Thyroid gland (tissue), 4 donors: ENCODE measurements at regions of chr1 and their contacts with region 1.

Region 1: GRCh38 chr1:113835642-113836307 is 23.5 kb upstream of the RSBN1 start:
- DNase-seq: peak in 1 of 2 donors; percentile 5
- H3K4me3 ChIP-seq: no peak overlapping the region
- H3K27ac ChIP-seq: no peak overlapping the region
- H3K4me1 ChIP-seq: no peaks in the 10 kb centered on the region
- H3K27me3 ChIP-seq: no peaks in the 10 kb centered on the region
- CTCF ChIP-seq: peak in 4 of 6 experiments; percentile 42 to 73 (median 58)
- POLR2A ChIP-seq: no peak

Region 2: DNA sequence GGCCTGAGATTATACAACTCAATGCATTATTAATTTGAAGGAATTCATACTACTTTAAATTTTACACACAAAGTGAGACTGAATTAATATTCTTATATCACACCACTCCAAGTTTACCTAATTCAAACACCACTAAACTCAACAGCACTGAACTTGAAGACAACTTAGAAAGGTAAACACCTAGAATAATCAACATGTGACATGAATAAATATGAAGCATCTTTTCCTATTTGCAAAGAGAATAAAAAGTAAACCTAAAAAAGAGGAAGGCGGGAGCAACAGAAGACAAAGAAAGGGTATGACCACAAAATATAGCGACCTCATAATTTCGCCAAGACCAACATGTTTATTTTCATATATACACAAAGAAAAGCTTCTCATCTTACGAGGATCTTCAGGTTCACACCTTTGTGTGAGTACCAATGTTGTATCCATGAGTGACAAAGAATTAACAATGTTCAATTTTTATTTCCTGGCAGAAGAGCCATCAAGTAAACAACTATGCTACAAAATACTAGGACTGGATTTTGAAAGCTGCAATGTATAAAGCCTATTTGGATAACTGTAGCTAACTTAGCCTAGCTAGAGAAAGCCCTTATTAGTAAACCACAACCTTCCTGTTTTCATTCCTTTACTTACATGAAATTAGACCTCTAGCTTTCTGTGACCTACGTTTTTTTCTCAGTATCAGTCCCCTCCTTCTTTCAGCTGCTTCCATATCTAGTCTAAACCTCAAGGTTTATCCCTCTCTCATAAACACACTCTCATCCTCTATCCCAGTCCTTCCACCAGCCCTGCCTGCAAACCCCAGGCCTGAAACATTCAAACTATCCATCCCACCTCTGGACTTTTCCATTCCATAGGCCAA is 55.3 kb before region 1 on chr1:
- intact Hi-C with region 1: no loop called
- DNase-seq: no peak
- H3K4me3 ChIP-seq: no peak overlapping the region
- H3K27ac ChIP-seq: no peak overlapping the region
- H3K4me1 ChIP-seq: peaks cover 12 to 14% of the 10 kb centered on the region in 2 donors
- H3K27me3 ChIP-seq: no peaks in the 10 kb centered on the region
- CTCF ChIP-seq: no peak
- POLR2A ChIP-seq: no peak

Region 3: DNA sequence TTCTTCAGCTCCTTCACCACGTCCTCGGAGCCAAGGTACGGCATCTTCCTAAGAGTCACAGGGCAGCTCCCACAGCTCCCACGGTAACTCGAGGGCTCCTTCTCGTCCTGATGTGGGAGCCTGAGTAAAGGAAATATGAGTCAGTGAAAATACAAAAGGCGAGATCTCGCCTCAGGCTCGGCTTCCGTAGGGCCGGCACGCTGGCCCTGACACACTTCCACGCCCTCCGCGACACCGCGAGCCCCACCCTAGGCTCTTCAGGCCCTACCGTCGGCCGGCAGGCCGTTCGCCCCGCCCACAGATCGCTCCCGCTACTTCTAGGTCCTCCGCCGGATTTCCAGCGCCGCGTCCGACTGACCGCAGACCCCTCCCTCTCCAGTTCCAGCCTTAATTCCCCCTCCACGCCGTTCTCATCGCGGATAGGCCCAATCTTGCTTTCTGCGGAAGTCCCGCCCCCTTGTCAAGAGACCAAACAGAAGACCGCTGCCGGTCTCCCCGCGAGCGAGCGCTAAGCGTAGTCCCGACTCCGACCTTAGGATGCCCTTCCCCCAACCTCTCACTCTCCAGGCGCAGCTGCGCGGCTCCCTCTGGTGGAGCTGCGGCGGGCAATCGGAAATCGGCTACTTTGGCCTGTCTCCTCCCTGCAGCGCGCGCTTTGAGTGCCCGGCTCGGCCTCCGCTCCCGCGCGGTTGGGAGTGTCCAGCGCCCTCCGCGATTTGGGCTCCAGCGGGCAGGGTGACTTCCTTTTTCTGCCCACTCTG is 69.1 kb after region 1 on chr1 and contains the starts of genes AP4B1 and DCLRE1B:
- intact Hi-C with region 1: loop called (anchors 10 kb)
- DNase-seq: peak; percentile 99
- H3K4me3 ChIP-seq: peak within 1 kb of the TSS; percentile 63 to 86 (median 69)
- H3K27ac ChIP-seq: peak within 1 kb of the TSS; percentile 58 to 94 (median 93)
- H3K4me1 ChIP-seq: peaks cover 8 to 11% of the 10 kb centered on the region in 2 donors
- H3K27me3 ChIP-seq: no peaks in the 10 kb centered on the region
- CTCF ChIP-seq: peak; percentile 13 to 84 (median 64)
- POLR2A ChIP-seq: peak in 1 of 2 donors; percentile 74
- total RNA-seq, gene AP4B1: 9.7 to 14.8 (median 14.0) TPM
- total RNA-seq, gene DCLRE1B: 3.2 to 5.0 (median 4.1) TPM

Region 4: DNA sequence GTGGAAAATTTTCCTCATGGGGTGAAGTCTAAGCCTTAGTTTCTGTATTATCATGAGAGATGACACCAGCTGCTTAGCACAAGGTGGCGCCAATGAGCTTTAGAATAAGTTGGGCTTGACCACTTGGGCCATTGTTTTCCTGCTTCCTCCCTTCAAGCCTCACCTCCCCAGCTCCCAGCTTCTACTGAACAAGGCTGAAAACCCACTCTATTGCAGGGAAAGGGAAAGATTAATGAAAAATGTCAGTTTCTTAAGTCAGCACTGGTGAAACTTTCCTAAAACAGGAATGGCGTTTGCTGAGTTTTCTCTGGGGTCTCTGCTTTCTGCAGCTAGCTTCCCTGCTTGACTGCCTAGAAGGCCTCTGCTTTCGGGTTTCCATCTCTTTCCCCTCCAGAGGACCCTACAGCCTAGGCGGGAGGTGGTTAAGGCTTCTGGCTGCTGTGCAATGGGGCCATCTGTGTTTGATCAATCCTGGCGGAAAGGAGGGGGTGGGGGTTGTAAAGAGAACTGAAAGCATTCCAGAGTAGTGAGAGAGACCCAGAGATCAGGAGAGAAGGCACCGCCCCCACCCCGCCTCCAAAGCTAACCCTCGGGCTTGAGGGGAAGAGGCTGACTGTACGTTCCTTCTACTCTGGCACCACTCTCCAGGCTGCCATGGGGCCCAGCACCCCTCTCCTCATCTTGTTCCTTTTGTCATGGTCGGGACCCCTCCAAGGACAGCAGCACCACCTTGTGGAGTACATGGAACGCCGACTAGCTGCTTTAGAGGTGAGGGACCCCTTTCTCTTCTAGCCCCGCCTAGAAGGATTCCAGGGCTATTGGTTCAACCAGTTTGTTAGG is 143.3 kb after region 1 on chr1 and contains the start of gene OLFML3:
- intact Hi-C with region 1: loop called (anchors 10 kb)
- DNase-seq: peak; percentile 87 to 92
- H3K4me3 ChIP-seq: no peak within 1 kb of the TSS
- H3K27ac ChIP-seq: peak within 1 kb of the TSS in 2 of 3 donors; percentile 38 to 56
- H3K4me1 ChIP-seq: peaks cover 41 to 57% of the 10 kb centered on the region in 2 donors
- H3K27me3 ChIP-seq: no peaks in the 10 kb centered on the region
- CTCF ChIP-seq: peak; percentile 53 to 84 (median 62)
- POLR2A ChIP-seq: no peak
- total RNA-seq, gene OLFML3: 20.2 to 28.3 (median 24.8) TPM

Region 5: GRCh38 chr1:114282751-114283403 is 447.1 kb after region 1 on chr1:
- intact Hi-C with region 1: loop called (anchors 10 kb)
- DNase-seq: peak; percentile 84 to 90
- H3K4me3 ChIP-seq: no peak overlapping the region
- H3K27ac ChIP-seq: no peak overlapping the region
- H3K4me1 ChIP-seq: no peaks in the 10 kb centered on the region
- H3K27me3 ChIP-seq: no peaks in the 10 kb centered on the region
- CTCF ChIP-seq: peak; percentile 46 to 90 (median 78)
- POLR2A ChIP-seq: no peak